ENCODE measurements at regions of chr1 and their contacts with region 1.

Region 1: DNA sequence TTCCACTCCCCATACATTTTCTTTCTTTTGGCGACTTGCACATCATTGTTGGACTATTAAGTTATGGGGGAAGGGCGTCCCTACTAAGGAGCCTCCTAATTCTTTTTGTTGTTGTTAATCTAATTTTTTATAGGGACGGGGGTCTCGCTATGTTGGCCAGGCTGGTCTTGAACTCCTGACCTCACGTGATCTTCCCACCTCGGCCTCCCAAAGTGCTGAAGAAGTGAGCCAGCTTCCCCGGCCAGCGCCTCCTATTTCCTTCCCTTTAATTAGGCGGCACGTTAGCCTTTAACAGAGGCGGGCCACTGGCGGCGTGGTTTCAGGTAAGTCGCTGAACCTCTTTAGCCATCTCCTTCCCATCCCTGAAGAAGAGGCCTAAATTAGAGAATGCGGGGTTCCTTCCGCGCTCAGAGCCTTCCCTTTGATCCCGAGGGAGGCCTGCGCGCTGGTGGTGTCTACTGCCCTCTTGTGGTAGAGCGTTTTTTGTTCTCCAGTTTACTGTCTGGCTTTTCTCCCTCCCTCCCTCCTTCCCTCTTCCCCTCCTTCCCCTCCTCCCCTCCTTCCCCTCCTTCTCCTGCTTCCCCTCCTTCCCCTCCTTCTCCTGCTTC is 38.1 kb downstream of the TNFRSF9 start:
- H3K4me3 ChIP-seq: no peak overlapping the region
- H3K27ac ChIP-seq: no peak overlapping the region
- H3K4me1 ChIP-seq: no peaks in the 10 kb centered on the region
- CTCF ChIP-seq: peak; percentile 83

Region 2: DNA sequence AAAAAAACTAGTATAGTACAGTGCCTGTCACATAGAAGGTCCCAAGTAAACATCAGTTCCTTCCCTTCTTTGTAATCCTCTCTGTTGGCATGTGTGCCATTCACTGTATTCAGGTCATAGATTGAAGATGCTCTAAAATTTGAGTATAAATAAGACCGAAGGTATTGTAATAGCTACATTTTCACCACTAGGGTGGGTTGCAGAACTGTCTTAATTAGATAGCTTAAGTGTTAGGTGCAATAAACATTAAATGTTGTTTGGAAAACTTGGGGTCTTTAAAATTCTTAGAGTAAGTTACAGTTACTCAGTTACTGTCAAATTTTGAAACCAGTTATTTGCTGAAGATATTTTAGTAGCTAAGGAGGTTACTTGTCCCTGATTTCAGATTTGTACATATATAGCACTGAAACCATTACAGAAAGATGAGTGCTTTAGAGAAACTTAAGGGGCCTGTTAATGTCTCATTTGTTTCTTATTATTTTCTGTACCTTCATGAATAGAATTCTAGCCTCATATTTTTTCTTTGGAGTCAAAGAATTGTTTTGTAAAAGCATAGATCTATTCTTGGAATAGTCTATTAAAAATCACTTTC is 94.2 kb before region 1 on chr1:
- CTCF ChIA-PET with region 1: interaction called, 14 read pairs
- POLR2A ChIA-PET with region 1: no interaction called
- H3K4me3 ChIP-seq: no peak overlapping the region
- H3K27ac ChIP-seq: no peak overlapping the region
- H3K4me1 ChIP-seq: no peaks in the 10 kb centered on the region
- CTCF ChIP-seq: 0 out of 2 replicates have a peak, but pooled peaks have one; percentile 18

Region 3: GRCh38 chr1:7873801-7874795 is 28.5 kb before region 1 on chr1:
- CTCF ChIA-PET with region 1: no interaction called
- POLR2A ChIA-PET with region 1: no interaction called
- H3K4me3 ChIP-seq: no peak overlapping the region
- H3K27ac ChIP-seq: no peak overlapping the region
- H3K4me1 ChIP-seq: no peaks in the 10 kb centered on the region
- CTCF ChIP-seq: no peak

Region 4: DNA sequence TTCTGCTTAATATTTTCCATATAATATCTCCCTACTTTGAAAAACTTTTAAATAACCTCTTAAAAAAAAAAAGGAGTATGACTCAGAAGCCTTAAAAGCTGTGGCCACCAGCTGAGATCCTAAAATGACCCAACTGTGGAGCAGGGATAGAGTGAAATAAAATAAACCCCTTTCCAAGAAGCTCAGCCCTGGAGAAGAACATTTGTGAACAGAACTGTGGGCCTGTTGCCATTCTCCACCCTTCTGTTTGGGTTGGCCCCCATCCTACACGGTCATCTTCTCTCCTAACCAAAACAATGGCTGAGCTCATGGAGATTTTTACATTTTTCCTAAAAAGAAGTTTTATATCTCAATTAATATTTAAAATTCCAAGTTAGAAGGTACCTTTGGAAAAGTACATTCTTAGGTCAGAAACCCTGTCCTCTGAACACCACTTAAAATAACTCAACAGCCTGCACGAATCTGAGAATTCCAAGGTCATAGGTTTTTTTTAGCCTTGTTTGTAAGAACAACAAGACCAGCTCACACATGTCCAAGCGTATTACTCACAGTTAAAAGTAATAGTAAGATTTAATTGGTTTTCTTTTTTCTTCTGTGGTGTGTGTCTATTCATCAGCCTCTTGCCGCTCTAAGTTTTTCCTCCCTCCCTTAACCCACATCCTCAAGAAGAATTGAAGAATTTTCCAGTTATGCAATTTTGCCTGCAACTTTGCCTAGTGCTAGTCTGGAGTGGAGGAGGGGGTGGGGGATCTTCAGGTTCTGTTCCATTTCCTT is 231.3 kb after region 1 on chr1:
- CTCF ChIA-PET with region 1: no interaction called
- POLR2A ChIA-PET with region 1: no interaction called
- H3K4me3 ChIP-seq: no peak overlapping the region
- H3K27ac ChIP-seq: no peak overlapping the region
- H3K4me1 ChIP-seq: peaks cover 9% of the 10 kb centered on the region
- CTCF ChIP-seq: no peak